Activated T-helper 1 cell treated with anti-CD3 and anti-CD28 coated beads, Interleukin-12 subunit alpha, Interleukin-12 subunit beta, Interleukin-2, Interleukin-4 antibody, amounts not matched to agents 30 ng/mL and 10 ng/mL and 1 ng/mL, durations not matched to agents 14 hours and 24 hours and 36 hours (primary cell): ENCODE measurements at regions of chr5 and their contacts with region 1.

Region 1: GRCh38 chr5:39217365-39218281 is 1.7 kb downstream of the FYB1 start:
- DNase-seq: peak; percentile 70
- H3K4me3 Mint-ChIP-seq: peak overlapping the region; percentile 74
- H3K27ac Mint-ChIP-seq: peak overlapping the region; percentile 78
- H3K4me1 Mint-ChIP-seq: peaks cover 59% of the 10 kb centered on the region
- H3K27me3 Mint-ChIP-seq: no peaks in the 10 kb centered on the region

Region 2: DNA sequence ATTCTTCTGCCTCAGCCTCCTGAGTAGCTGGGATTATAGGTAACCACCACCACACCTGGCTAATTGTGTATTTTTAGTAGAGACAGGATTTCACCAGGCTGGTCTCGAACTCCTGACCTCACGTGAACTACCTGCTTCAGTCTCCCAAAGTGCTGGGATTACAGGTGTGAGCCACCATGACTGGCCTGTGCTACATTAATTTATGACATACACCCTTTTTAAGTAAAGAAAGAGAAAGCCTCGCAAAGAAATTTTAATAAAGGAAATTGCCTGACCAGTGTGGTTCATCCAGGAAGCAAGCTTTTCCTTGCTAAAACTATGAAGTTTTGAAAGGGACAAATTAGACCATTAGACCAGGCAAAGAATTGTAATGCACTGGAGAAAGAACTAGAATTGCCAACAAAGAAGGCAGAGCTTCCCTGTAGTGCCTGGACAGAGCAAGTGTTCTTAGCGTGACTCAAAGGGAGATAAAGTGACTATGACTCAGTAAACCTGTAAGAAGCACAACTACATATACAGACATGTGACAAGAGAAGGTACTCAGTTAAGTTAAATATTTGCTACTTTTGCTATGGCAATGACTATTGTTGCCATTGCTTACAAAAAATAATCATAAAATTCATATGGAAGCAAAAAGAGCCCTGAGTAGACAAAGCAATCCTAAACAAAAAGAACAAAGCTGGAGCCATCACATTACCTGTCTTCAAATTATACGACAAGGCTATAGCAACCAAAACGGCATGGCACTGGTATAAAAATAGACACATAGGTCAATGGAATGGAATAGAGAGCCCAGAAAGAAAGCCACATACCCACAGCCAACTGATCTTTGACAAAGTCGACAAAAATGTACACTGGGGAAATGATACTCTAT is 52.9 kb before region 1 on chr5:
- intact Hi-C with region 1: loop called (anchors 1 kb)
- DNase-seq: no peak
- H3K4me3 Mint-ChIP-seq: peak overlapping the region; percentile 72
- H3K27ac Mint-ChIP-seq: peak overlapping the region; percentile 96
- H3K4me1 Mint-ChIP-seq: peaks cover 85% of the 10 kb centered on the region
- H3K27me3 Mint-ChIP-seq: no peaks in the 10 kb centered on the region

Region 3: DNA sequence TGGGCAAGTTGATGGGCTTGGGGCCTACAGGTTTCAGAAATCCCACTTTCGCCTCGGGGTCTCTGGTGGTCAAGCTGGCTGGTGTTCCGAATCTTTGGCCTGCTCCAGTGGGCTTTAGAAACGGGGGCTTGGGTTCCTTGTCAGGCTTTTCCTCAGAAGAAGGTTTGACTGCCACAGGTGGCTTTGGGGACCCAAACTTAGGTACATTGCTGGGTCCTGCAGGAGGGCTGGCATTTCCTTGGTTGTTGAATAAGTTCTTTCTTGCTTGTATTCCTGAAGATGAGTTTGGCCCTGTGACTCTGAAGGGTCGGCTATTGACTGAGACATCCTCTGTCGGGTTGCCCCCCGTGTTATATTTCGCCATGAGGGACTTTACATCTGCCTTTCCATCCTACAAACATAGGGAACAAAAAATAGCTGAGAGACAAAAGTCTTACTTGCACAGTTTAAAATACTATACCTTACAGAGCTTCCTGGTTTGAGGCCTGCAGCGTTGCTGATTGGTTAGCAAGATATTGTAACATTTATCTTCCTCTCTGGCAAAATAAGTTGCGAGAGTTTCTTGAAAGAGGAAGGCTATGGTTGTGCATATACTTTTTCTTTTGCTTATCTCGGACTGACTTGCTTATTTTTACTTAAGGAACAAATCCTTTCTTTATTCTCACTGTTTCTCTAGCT is 14.9 kb before region 1 on chr5:
- intact Hi-C with region 1: loop called (anchors 2 kb)
- DNase-seq: no peak
- H3K4me3 Mint-ChIP-seq: peak overlapping the region; percentile 89
- H3K27ac Mint-ChIP-seq: peak overlapping the region; percentile 88
- H3K4me1 Mint-ChIP-seq: peaks cover 64% of the 10 kb centered on the region
- H3K27me3 Mint-ChIP-seq: no peaks in the 10 kb centered on the region

Region 4: GRCh38 chr5:39274398-39275085 is 56.9 kb after region 1 on chr5:
- intact Hi-C with region 1: loop called (anchors 2 kb)
- DNase-seq: no peak
- H3K4me3 Mint-ChIP-seq: peak overlapping the region; percentile 82
- H3K27ac Mint-ChIP-seq: peak overlapping the region; percentile 95
- H3K4me1 Mint-ChIP-seq: peaks cover 41% of the 10 kb centered on the region
- H3K27me3 Mint-ChIP-seq: no peaks in the 10 kb centered on the region

Region 5: DNA sequence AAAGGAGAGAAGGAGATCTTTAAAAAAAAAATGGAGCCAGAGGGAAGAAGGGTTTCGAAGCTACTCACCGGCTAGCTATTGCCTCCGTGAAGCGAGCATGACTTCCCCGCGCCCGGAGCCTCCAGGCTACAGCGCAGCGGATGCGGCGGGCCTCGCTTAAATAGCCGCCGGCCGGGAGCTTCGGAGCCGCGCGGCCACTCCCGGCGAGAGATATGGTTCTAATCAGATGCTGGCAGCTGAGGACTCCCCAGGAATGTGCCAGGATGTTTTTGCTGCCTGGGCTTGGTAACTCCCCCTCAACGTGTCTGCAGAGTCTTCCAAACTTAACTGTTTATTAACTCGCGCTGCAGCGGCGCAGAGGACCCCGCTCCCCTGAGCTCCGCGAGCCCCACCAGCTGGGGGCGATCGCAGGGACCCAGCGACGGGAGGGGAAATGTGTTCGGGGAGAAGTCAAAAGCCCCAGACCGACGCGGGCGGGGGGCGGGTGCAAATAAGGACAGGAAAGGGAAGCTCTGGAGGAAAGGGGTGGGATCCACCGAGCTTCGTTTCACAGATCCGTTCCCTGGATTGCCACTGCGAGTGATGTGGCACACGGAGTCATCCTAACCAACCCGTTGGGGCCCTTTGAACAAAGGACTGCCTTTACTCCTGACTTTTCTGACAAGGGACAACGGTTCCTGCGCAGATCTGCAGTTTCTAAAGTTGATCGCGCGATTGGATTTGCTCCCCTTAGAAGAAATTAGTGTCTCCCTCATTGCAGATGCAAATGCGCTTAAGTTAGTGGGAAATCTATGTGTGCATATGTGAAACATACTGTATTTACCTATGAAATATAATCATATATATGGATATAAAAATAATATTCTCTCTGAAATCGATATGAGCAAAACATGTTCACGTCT is 207.4 kb after region 1 on chr5 and contains the start of gene DAB2:
- intact Hi-C with region 1: no loop called
- DNase-seq: peak; percentile 10
- H3K4me3 Mint-ChIP-seq: peak within 1 kb of the TSS; percentile 72
- H3K27ac Mint-ChIP-seq: no peak within 1 kb of the TSS
- H3K4me1 Mint-ChIP-seq: no peaks in the 10 kb centered on the region
- H3K27me3 Mint-ChIP-seq: peaks cover 55% of the 10 kb centered on the region
- total RNA-seq, gene DAB2: not detected in 2 replicates

Region 6: DNA sequence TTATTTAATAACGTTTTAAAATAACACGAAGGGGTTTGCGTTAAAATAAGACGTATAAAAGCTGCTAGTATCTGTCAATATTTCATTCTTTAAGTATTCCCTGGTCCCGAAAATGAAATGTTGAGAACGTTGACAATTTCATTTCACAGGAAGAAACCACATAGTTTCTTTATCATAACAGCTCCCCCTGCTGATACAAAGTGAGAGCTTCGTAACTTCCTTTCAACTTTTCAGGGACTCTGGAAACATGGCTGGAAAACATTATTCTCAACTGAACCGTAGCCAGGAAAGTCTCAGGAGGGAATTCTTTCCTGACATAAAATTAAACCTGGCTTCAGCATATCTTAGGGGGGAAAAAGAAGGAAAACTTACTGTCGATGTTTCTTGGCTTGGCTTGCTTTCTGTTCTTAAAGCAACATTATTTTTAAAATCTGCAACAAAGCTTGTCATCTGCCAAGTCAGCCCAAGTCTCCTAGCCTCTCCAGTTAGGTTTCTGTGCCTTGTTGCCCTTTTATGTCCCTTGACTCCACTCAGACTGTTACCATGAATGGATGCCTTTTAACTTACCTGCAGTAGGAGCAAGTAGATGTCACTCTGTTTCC is 330.0 kb after region 1 on chr5:
- intact Hi-C with region 1: loop called (anchors 1 kb)
- DNase-seq: no peak
- H3K4me3 Mint-ChIP-seq: no peak overlapping the region
- H3K27ac Mint-ChIP-seq: no peak overlapping the region
- H3K4me1 Mint-ChIP-seq: peaks cover 7% of the 10 kb centered on the region
- H3K27me3 Mint-ChIP-seq: peaks cover 6% of the 10 kb centered on the region

Region 7: DNA sequence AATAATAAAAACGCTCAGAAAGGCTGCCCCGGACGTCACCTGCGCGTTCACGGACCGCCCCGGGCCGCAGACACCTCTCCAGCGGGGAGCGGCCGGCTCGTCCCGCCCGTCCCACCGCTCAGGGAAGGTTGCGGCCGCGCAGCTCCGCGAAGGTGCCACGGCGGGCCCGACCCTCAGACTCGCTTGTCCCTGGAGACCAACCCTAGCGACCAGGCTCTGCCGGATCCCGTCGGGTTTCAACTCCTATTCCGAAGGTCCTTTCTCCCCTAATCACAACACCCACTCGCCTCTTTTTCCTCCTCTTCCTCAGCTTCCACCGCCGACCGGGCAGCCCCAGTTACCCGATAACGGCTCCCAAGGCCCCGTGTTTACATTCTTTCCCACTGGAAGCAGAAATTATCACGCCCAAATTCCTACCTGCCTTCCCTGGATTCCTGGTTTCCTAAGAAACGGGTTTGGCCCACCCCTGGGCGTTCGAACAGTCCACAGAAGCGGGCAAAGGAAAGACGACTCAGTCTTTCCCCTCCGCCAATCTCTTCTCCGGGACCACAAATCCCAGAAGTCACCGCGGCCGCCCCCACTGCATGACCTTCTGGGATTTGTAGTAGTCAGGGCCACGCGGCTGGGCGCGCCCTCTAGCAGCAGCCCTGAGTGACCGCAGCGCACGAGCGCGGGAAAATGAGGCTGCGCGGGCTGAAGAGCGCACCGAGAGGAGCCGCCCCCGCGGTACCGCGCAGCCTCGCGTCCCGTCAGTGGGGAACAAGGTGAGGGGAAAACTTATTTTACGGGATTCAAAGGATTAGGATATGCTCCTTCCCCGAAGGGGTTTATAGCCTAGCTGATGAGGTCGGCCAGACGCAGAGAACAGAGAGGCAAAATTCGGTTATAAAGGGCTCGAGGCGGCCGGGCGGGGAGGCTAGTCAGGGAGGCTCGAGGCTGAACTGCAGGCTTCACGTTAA is 1538.1 kb after region 1 on chr5 and contains the start of gene TTC33:
- intact Hi-C with region 1: loop called (anchors 10 kb)
- DNase-seq: peak; percentile 92
- H3K4me3 Mint-ChIP-seq: no peak within 1 kb of the TSS
- H3K27ac Mint-ChIP-seq: peak within 1 kb of the TSS; percentile 41
- H3K4me1 Mint-ChIP-seq: peaks cover 21% of the 10 kb centered on the region
- H3K27me3 Mint-ChIP-seq: no peaks in the 10 kb centered on the region
- total RNA-seq, gene TTC33: 23.4 and 24.6 TPM in 2 replicates